PC-3 (cell line): ENCODE measurements at regions of chr10 and their contacts with region 1.

Region 1: DNA sequence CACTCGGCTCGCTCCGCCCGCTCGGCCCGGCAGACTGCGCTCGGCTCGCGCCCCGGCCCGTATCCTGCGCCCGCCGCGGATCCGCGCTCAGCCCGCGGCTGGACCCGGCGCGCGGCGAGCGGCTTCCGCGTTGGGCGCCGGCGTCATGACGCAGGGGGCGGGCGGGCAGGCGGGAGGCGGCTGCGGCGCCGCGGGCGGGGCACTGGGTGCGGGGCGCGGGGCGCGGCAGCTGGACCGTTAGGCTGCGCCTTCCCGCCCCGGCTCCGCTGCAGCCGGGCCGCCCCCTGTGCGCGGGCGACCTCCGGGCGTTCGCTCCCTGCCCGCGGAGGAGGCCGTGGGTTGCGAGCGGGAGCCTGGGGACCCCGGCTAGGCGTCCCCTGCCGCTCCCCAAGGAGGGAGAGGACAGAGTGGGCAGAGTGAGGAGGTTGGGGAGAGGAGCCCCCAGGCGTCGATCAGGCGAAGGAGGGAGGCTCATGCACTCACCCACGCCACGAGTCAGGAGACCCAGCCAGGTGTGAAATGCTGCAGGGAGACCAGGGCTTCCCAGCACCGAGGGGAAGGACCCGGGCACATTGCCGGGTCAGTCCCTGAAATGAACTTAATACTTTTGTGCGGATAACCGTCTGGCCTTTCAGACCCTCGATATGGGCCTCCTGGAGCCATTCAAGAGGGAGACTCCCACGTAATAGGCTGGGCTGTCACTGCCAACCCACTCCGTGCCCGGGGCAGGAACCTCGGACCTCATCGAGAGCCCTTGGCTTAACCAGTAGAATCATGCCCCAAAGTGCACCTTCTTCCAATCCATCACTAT is at the start of gene PIP4K2A:
- DNase-seq: peak; percentile 72
- ATAC-seq: peak; percentile 81
- H3K4me3 ChIP-seq: peak within 1 kb of the TSS; percentile 92
- H3K27ac ChIP-seq: no peak within 1 kb of the TSS
- H3K4me1 ChIP-seq: peaks cover 13% of the 10 kb centered on the region
- H3K27me3 ChIP-seq: no peaks in the 10 kb centered on the region
- CTCF ChIP-seq: no peak
- total RNA-seq, gene PIP4K2A: 20.2 and 22.6 TPM in 2 replicates

Region 2: GRCh38 chr10:22436884-22437619 is 277.6 kb before region 1 on chr10:
- CTCF ChIA-PET with region 1: no interaction called
- POLR2A ChIA-PET with region 1: interaction called, 3 read pairs
- intact Hi-C with region 1: loop called (anchors 5 kb)
- DNase-seq: peak; percentile 80
- ATAC-seq: peak; percentile 64
- H3K4me3 ChIP-seq: peak overlapping the region; percentile 93
- H3K27ac ChIP-seq: peak overlapping the region; percentile 95
- H3K4me1 ChIP-seq: peaks cover 50% of the 10 kb centered on the region
- H3K27me3 ChIP-seq: no peaks in the 10 kb centered on the region
- CTCF ChIP-seq: 0 out of 2 replicates have a peak, but pooled peaks have one; percentile 10

Region 3: DNA sequence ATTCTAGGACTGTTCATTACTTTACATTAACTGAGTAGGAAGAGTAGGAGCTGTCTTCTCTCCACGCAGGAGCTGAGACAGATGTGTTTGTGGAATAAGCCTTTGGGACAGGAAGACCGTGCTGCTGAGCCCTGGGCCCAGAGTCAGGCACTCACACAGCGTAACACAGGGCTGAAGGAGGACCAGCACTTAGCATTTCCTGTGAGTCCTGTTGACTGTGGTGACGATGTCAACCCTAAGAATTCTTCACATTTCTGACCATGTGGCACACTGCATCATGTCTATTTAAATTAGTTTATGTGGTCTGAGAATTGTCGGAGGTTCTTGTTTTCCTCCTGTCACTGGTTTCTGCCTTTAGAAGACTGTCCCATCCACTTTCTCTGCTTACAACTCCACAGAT is 117.5 kb before region 1 on chr10:
- CTCF ChIA-PET with region 1: no interaction called
- POLR2A ChIA-PET with region 1: no interaction called
- intact Hi-C with region 1: loop called (anchors 10 kb)
- DNase-seq: no peak
- ATAC-seq: no peak
- H3K4me3 ChIP-seq: no peak overlapping the region
- H3K27ac ChIP-seq: no peak overlapping the region
- H3K4me1 ChIP-seq: peaks cover 38% of the 10 kb centered on the region
- H3K27me3 ChIP-seq: no peaks in the 10 kb centered on the region
- CTCF ChIP-seq: no peak

Region 4: DNA sequence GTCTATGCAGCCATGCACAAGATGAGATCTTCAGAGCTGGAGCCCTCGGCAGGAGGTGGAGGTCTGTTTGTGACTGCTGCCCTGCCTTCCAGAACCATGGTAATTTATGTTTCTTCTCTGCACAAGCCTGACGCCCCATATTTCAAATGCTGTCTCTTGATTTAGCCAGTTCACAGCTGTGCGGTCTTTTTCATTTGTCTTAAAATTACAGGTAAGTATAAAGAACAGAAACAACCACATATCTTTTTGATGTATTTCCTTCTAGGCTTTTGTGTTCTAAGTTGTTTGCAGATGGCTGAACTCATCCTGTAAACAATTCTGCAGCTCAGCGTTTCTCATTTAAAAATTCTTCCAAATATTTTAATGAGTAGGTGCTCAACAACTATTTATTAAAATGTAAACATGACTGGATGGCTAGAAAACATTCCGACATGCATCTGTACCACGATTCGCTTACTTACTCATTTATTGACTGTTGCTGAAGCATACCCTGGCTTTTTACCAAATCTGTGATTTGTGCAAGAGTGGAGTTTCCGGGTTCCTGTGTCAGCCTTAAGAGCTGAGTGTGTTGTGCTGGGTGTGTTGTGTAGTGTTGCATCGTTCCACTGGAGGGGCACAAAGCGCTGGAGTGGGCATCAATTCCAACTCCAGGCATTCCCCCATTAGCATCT is 59.2 kb before region 1 on chr10:
- CTCF ChIA-PET with region 1: no interaction called
- POLR2A ChIA-PET with region 1: no interaction called
- intact Hi-C with region 1: loop called (anchors 1 kb)
- DNase-seq: peak; percentile 93
- ATAC-seq: peak; percentile 87
- H3K4me3 ChIP-seq: peak overlapping the region; percentile 60
- H3K27ac ChIP-seq: peak overlapping the region; percentile 88
- H3K4me1 ChIP-seq: peaks cover 49% of the 10 kb centered on the region
- H3K27me3 ChIP-seq: no peaks in the 10 kb centered on the region
- CTCF ChIP-seq: no peak; the same call in 1 of the 2 replicates

Region 5: GRCh38 chr10:22666287-22667092 is 48.2 kb before region 1 on chr10:
- CTCF ChIA-PET with region 1: no interaction called
- POLR2A ChIA-PET with region 1: no interaction called
- intact Hi-C with region 1: no loop called
- DNase-seq: no peak
- ATAC-seq: no peak
- H3K4me3 ChIP-seq: no peak overlapping the region
- H3K27ac ChIP-seq: no peak overlapping the region
- H3K4me1 ChIP-seq: no peaks in the 10 kb centered on the region
- H3K27me3 ChIP-seq: no peaks in the 10 kb centered on the region
- CTCF ChIP-seq: no peak

Region 6: GRCh38 chr10:22682237-22683139 is 32.2 kb before region 1 on chr10:
- CTCF ChIA-PET with region 1: no interaction called
- POLR2A ChIA-PET with region 1: no interaction called
- intact Hi-C with region 1: loop called (anchors 2 kb)
- DNase-seq: peak; percentile 78
- ATAC-seq: peak; percentile 50
- H3K4me3 ChIP-seq: peak overlapping the region; percentile 64
- H3K27ac ChIP-seq: peak overlapping the region; percentile 100
- H3K4me1 ChIP-seq: peaks cover 53% of the 10 kb centered on the region
- H3K27me3 ChIP-seq: no peaks in the 10 kb centered on the region
- CTCF ChIP-seq: no peak

Region 7: GRCh38 chr10:22816298-22816653 is 101.6 kb after region 1 on chr10:
- CTCF ChIA-PET with region 1: no interaction called
- POLR2A ChIA-PET with region 1: no interaction called
- intact Hi-C with region 1: loop called (anchors 2 kb)
- DNase-seq: peak; percentile 92
- ATAC-seq: peak; percentile 96
- H3K4me3 ChIP-seq: no peak overlapping the region
- H3K27ac ChIP-seq: peak overlapping the region; percentile 89
- H3K4me1 ChIP-seq: peaks cover 26% of the 10 kb centered on the region
- H3K27me3 ChIP-seq: no peaks in the 10 kb centered on the region
- CTCF ChIP-seq: no peak